ENCODE measurements at regions of chr20 and their contacts with region 1.

Region 1: DNA sequence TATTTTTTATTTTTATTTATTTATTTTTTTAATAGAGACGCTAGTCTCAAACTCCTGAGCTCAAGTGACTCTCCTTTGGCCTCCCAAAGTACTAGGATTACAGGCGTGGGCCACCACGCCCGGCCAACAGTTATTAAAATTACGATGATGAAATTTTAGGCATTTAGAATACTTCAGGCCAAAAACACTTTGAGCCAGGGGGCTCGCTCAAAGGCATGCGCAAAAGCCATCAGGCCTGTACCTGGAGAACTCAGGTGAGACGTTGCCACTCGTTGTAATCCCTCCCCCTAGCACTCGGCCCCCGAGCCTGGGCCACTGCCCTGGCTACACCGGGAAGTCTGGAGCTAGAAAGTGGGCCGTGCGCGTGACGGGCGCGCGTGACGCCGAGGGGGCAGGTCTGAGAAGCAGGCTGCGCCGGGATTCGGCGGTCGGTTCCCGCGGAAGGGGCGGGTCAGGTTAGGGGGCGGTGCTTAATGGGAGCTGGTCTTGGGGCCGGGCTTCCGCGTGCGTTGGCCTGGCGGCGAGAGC is 337 bp upstream of the CBFA2T2 start:
- DNase-seq: peak; percentile 74
- H3K4me3 ChIP-seq: peak overlapping the region; percentile 60
- H3K27me3 ChIP-seq: no peaks in the 10 kb centered on the region
- CTCF ChIP-seq: no peak

Region 2: DNA sequence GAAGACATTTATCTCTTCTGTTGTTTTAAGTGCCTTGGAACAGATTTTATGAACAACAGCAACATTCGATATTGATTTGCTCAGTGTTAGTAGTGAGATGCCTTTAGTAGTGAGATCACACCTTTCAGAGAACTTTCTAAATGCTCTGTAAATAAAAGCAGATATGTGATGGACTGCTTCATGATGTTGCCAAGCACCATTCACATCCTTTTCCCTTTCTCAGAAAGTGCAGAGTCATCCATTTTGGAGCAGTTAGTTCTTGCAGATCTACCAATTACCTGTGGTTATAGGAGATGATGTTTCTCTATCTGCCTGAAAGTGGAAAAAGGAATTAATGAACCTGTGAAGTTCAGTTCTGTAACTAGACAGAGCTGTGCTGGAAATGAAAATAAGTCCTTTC is 27.3 kb after region 1 on chr20:
- CTCF ChIA-PET with region 1: no interaction called
- POLR2A ChIA-PET with region 1: interaction called, 12 read pairs
- DNase-seq: no peak
- H3K4me3 ChIP-seq: no peak overlapping the region
- H3K27me3 ChIP-seq: no peaks in the 10 kb centered on the region
- CTCF ChIP-seq: no peak

Region 3: GRCh38 chr20:33576432-33577125 is 87.0 kb after region 1 on chr20:
- CTCF ChIA-PET with region 1: no interaction called
- POLR2A ChIA-PET with region 1: no interaction called
- DNase-seq: no peak
- H3K4me3 ChIP-seq: no peak overlapping the region
- H3K27me3 ChIP-seq: no peaks in the 10 kb centered on the region
- CTCF ChIP-seq: no peak; the same call in 1 of the 2 replicates

Region 4: DNA sequence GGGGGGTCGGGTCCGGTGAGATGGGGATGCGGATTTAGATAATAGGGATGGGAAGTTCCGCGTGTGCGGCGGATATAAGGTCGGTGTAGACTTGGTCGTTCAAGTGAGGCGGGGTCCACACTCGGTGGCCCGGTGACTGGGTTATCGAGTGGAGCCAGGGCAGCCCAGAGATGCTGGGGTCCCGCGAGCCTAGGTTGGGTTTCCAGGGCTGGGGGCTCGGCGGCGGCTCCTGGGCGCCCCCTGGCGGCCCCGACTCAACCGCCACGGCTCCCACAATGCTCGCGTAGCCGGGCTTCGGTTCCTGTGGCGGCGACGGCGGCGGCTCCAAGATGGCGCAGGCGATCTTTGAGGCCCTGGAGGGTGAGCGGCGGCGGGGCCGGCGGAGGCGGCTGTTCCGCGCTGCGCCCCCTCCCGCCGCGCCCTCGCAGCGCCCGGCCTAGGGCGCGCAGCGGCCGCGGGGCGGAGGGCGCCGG is 242.2 kb after region 1 on chr20 and contains the start of gene ZNF341:
- CTCF ChIA-PET with region 1: no interaction called
- POLR2A ChIA-PET with region 1: no interaction called
- DNase-seq: peak; percentile 9
- H3K4me3 ChIP-seq: peak within 1 kb of the TSS; percentile 55
- H3K27me3 ChIP-seq: no peaks in the 10 kb centered on the region
- CTCF ChIP-seq: peak; percentile 77
- polyA plus RNA-seq, gene ZNF341: 1.3 and 2.9 TPM in 2 replicates